ENCODE measurements at regions of chr10 and their contacts with region 1.

Region 1: GRCh38 chr10:103685880-103686669 is 169.3 kb downstream of the SH3PXD2A start:
- DNase-seq: peak; percentile 91
- H3K4me3 ChIP-seq: no peak overlapping the region
- H3K27ac ChIP-seq: no peak overlapping the region
- H3K4me1 ChIP-seq: peaks cover 0 to 15% (median 10%) of the 10 kb centered on the region in 6 donors
- H3K27me3 ChIP-seq: no peaks in the 10 kb centered on the region
- CTCF ChIP-seq: peak; percentile 70 to 96 (median 91)
- POLR2A ChIP-seq: no peak

Region 2: DNA sequence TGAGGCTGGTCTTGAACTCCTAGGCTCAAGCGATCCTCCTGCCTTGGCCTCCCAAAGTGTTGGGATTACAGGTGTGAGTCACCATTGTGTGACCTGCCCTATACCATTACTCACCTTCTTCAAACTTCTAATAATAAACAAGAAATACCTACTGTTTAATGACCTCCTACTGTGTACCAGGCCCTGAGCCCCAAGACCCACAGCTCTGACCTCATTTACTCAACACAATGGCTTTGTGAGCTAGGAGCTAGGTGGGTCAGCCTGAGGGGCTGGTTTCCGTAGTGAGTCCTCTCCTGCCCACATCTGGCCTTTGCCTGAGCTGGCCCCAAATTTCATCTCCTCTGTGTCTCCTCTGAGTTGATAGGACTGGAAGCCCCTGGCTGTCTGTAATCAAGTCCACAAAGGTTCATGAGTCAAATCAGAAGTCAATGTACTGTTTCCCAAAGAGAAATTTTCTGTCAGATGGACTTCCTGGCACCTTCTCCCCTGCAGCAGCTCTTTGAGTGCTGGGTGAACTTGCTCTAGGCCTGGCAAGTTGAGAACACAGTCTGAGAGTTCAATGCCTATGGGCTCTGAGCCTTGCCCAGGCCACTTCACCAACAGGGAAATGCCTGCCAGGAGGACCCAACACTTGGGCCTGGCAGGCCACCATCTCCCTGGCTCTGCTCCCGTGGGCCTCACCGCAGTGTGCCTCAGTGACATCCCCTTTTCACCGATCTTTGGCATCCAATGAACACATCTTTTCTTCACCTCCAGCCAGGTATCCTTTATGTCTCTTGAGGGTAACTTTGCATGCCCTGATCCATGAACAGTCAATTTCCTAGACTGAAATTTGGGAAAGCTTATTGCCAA is 168.6 kb before region 1 on chr10:
- intact Hi-C with region 1: no loop called
- DNase-seq: peak; percentile 19
- H3K4me3 ChIP-seq: no peak overlapping the region
- H3K27ac ChIP-seq: no peak overlapping the region
- H3K4me1 ChIP-seq: peaks cover 3 to 14% (median 8%) of the 10 kb centered on the region in 6 donors
- H3K27me3 ChIP-seq: no peaks in the 10 kb centered on the region
- CTCF ChIP-seq: no peak
- POLR2A ChIP-seq: no peak

Region 3: GRCh38 chr10:103598654-103599115 is 87.4 kb before region 1 on chr10:
- intact Hi-C with region 1: loop called (anchors 5 kb)
- DNase-seq: no peak
- H3K4me3 ChIP-seq: no peak overlapping the region
- H3K27ac ChIP-seq: no peak overlapping the region
- H3K4me1 ChIP-seq: peaks cover 0 to 10% (median 4%) of the 10 kb centered on the region in 6 donors
- H3K27me3 ChIP-seq: no peaks in the 10 kb centered on the region
- CTCF ChIP-seq: peak in 8 of 11 experiments; percentile 23 to 59 (median 48)
- POLR2A ChIP-seq: no peak

Measured in spleen (tissue), 13 donors.